ENCODE measurements at regions of chr2 and their contacts with region 1.

Region 1: DNA sequence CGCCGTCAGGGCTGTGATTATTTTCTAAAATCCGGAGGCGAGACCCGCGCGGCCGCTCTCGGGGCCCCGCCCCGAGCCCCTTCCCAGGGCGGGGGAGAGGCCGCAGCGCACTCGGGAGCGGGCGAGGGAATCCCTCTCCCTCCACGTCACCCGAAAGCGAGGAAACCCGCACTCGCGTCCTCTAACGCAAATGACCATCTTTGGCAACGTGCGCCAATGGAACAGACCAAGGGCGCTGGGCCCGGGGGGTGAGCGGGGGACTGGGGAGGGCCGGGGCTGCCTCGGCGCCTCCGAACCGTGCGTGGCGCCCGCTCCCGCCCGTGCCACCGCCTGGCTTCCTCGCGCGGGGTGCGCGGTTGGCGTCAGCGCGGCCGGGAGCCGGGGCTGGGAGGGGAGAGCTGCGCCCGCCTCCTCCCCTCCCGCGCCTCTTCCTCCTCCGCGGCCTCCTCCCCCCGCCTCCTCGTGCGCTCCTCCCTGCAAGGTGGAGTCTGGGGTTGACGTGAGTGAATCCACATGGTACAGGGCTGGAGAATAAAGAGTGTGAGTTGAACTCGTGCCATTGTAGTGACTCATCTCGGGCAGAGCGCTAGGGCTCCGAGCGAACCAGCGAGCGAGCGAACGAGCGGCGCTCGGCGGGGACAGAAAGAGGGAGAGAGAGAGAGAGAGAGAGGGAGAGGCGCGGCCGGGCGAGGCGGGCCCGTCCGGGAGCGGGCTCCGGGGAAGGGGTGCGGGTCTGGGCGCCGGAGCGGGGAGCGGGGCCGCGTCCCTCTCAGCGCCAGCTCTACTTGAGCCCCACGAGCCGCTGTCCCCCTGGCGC is at the start of gene FOSL2:
- DNase-seq: peak; percentile 97
- H3K4me3 Mint-ChIP-seq: peak within 1 kb of the TSS; percentile 94
- H3K27ac Mint-ChIP-seq: peak within 1 kb of the TSS; percentile 98
- H3K4me1 Mint-ChIP-seq: peaks cover 30% of the 10 kb centered on the region
- H3K27me3 Mint-ChIP-seq: peaks cover 2% of the 10 kb centered on the region
- total RNA-seq, gene FOSL2: 172 to 182 TPM

Region 2: DNA sequence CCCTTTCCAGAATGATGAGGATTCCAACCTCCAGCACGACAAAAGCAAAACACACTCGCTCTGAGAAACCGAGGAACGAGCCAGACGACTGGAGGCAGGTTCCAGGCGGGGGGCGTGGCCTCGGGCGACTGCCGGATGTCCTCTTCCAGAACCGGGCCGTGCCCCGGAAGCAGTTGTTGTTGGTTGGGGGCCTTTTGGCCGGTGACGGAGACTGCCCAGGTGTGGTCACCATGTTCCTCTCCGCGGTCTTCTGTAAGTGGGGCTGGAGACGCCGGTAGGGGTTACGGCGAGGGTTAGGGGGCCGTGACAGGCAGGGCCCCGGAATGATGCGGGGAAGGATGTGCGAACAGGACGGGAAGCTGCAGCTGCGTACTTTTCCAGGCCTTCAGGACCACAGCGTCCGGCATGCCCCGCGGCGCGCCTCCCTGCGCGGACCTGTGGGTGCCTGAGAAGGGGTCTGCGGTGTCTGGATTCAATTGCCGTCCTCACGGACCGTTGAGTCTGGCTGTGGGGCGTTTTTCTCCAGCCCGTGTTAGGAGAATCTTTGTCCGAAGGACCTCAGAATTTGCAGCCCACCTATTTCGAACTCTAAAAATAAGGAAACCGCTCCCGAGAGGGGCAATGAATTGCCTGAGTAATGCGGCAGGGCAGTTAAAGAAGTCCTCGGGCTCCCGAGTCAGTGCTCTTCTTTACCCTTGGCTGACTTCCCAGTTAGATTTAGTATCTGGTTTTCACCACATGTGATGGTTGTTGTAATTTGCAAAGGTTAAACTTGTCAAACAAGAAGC is 620.8 kb before region 1 on chr2 and contains the start of gene MRPL33:
- CTCF ChIA-PET with region 1: no interaction called
- POLR2A ChIA-PET with region 1: no interaction called
- intact Hi-C with region 1: loop called (anchors 2 kb)
- DNase-seq: peak; percentile 95
- H3K4me3 Mint-ChIP-seq: peak within 1 kb of the TSS; percentile 100
- H3K27ac Mint-ChIP-seq: peak within 1 kb of the TSS; percentile 97
- H3K4me1 Mint-ChIP-seq: peaks cover 38% of the 10 kb centered on the region
- H3K27me3 Mint-ChIP-seq: no peaks in the 10 kb centered on the region
- total RNA-seq, gene MRPL33: 83.3 to 84.2 TPM

Region 3: GRCh38 chr2:28250006-28250405 is 142.5 kb before region 1 on chr2:
- CTCF ChIA-PET with region 1: no interaction called
- POLR2A ChIA-PET with region 1: interaction called, 3 read pairs
- intact Hi-C with region 1: loop called (anchors 2 kb)
- DNase-seq: no peak
- H3K4me3 Mint-ChIP-seq: no peak overlapping the region
- H3K27ac Mint-ChIP-seq: no peak overlapping the region
- H3K4me1 Mint-ChIP-seq: peaks cover 48% of the 10 kb centered on the region
- H3K27me3 Mint-ChIP-seq: no peaks in the 10 kb centered on the region

Region 4: DNA sequence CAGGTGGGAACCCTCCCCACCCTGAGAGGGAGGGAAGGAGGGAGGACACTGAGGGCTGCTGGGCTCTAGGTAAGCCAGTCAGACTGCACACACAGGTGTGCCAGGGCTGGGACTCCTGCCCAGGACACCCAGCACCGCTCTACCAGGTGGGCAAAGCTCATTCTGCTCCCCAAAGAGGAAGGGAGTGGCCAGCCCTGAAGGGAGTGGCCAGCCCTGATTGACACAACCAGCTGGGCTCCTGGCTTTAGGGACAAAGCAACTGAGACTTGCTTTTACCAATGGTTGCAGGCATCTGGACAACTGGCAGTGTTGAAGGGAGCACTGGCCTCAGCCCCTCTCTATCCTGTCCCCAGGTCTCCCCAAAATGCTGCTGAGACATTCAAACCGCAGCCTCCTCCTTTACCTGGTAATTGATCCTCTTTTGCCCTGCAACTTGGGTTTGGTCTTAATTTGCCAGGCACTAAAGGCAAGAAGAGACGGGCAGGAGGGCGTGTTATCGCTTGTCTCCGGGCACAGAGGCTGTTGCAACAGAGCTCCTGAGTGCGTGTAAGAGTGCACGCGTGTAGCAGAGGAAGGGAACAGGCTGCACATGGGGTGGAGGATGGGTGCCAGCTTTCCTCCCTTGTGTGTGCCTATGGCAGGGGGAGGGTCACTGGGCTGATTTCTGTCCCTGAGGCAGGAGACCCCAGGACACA is 14.4 kb before region 1 on chr2:
- CTCF ChIA-PET with region 1: interaction called, 4 read pairs
- POLR2A ChIA-PET with region 1: interaction called, 11 read pairs
- intact Hi-C with region 1: no loop called
- DNase-seq: no peak
- H3K4me3 Mint-ChIP-seq: no peak overlapping the region
- H3K27ac Mint-ChIP-seq: no peak overlapping the region
- H3K4me1 Mint-ChIP-seq: peaks cover 26% of the 10 kb centered on the region
- H3K27me3 Mint-ChIP-seq: no peaks in the 10 kb centered on the region

Region 5: DNA sequence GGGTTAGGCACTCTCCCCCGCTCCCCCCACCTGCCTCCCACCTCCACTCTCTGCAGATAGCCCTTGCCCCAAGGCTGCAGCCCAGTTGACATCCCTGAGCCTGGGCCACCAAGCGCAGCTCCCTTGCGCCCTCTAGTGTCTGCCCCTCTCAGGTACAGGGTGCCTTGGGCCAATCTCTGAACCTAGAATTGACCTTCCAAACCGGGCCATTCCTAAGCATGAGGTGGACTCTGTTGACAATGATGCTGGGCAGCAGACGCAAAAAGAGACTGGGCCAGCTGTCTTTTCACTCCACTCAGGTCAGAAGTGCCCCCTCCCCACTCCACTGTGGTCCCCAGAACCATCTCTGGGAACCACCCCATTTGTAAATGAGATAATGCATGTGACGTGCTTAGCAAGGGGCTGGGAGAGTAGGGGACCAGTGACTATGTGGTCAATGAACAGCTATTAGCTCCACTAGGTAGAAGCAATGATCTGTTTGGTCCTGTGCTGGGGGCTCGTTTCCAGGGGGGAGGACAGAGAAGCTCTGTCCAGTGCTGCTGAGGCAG is 60.1 kb after region 1 on chr2:
- CTCF ChIA-PET with region 1: interaction called, 6 read pairs
- POLR2A ChIA-PET with region 1: interaction called, 37 read pairs
- intact Hi-C with region 1: loop called (anchors 1 kb)
- DNase-seq: peak; percentile 89
- H3K4me3 Mint-ChIP-seq: no peak overlapping the region
- H3K27ac Mint-ChIP-seq: peak overlapping the region; percentile 59
- H3K4me1 Mint-ChIP-seq: peaks cover 45% of the 10 kb centered on the region
- H3K27me3 Mint-ChIP-seq: no peaks in the 10 kb centered on the region

Region 6: DNA sequence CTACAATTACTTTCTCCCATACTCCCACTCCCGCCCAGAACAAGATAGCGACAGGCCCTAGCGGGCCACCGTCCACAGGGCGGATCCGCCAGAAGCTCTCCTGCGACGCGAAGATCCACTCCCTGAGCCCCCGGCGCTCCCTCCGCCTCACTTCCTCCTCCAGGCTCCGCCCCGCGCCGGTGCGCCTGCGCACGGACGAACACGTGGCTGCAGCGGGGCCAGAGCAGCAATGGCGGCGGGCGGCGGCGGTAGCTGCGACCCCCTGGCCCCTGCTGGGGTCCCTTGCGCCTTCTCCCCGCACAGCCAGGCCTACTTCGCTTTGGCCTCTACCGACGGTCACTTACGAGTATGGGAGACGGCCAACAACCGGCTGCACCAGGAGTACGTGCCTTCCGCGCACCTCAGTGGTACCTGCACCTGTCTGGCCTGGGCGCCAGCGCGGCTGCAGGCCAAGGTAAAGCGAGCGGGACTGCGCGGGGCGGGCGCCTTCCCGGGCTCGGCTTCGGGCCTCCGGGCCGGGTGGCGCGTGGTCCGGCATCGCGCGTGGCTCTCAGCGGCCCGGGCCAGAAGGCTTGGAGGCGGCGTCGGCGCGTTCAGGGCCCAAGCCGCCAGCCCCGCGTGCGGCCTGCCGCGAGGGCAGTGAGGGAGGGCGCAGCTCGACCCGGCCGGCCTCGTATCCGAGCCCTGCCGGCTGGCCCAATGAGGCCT is 502.1 kb after region 1 on chr2 and contains the start of gene WDR43:
- CTCF ChIA-PET with region 1: no interaction called
- POLR2A ChIA-PET with region 1: no interaction called
- intact Hi-C with region 1: loop called (anchors 2 kb)
- DNase-seq: peak; percentile 98
- H3K4me3 Mint-ChIP-seq: peak within 1 kb of the TSS; percentile 93
- H3K27ac Mint-ChIP-seq: peak within 1 kb of the TSS; percentile 94
- H3K4me1 Mint-ChIP-seq: peaks cover 34% of the 10 kb centered on the region
- H3K27me3 Mint-ChIP-seq: no peaks in the 10 kb centered on the region
- total RNA-seq, gene WDR43: 72.7 to 84.8 TPM